Common myeloid progenitor, CD34-positive (primary cell): ENCODE measurements at regions of chr12 and their contacts with region 1.

Region 1: DNA sequence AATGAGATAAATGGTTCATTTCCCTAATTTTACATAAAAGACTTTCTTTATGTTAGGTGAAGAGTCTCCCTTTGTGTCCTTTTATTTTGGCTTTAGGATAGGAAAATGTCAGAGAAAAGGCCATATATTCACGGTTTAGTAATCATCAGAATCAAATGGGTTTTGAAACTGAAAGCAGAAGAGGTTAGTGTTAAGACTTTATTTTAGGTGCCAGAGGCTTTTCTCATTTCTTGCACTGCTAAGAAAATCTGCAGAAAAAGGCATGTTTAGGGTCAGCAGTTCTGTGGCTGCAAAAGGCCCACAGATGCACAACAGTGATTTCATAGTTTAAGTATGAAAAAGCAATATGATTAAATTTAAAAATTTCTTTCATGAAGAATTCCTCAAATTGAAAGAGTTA is 80.4 kb upstream of the SINHCAF start:
- DNase-seq: no peak
- H3K4me3 ChIP-seq: no peak overlapping the region
- H3K27ac ChIP-seq: no peak overlapping the region
- H3K4me1 ChIP-seq: peaks cover 0 to 1% (median 0%) of the 10 kb centered on the region in 4 experiments
- H3K27me3 ChIP-seq: no peaks in the 10 kb centered on the region

Region 2: GRCh38 chr12:31393004-31393550 is 13.3 kb before region 1 on chr12:
- CTCF ChIA-PET with region 1: interaction called, 18 read pairs
- POLR2A ChIA-PET with region 1: no interaction called
- DNase-seq: no peak
- H3K4me3 ChIP-seq: no peak overlapping the region
- H3K27ac ChIP-seq: no peak overlapping the region
- H3K4me1 ChIP-seq: no peaks in the 10 kb centered on the region
- H3K27me3 ChIP-seq: no peaks in the 10 kb centered on the region

Region 3: DNA sequence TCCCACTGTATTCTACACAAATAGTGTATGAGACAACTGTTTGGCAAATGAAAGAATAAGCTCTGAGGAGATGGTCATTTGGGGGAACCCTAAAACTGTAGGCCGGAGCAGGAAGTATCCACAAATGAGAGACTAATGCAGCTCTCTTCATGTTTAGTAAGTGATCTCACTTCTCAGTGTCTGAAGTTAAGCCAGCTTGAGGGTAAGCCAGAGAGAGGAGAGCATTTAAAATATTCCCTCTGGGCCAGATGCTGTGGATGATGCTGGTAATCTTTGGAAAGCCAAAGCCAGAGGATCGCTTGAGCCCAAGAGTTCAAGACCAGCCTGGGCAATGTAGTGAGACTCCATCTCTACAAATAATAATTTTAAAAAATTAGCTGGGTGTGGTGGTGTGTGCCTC is 50.2 kb after region 1 on chr12:
- CTCF ChIA-PET with region 1: no interaction called
- POLR2A ChIA-PET with region 1: no interaction called
- DNase-seq: no peak
- H3K4me3 ChIP-seq: no peak overlapping the region
- H3K27ac ChIP-seq: no peak overlapping the region
- H3K4me1 ChIP-seq: no peaks in the 10 kb centered on the region
- H3K27me3 ChIP-seq: no peaks in the 10 kb centered on the region

Region 4: GRCh38 chr12:31631784-31632183 is 225.4 kb after region 1 on chr12:
- CTCF ChIA-PET with region 1: interaction called, 19 read pairs
- POLR2A ChIA-PET with region 1: no interaction called
- DNase-seq: no peak
- H3K4me3 ChIP-seq: no peak overlapping the region
- H3K27ac ChIP-seq: no peak overlapping the region
- H3K4me1 ChIP-seq: peaks cover 0 to 5% (median 1%) of the 10 kb centered on the region in 4 experiments
- H3K27me3 ChIP-seq: no peaks in the 10 kb centered on the region

Region 5: DNA sequence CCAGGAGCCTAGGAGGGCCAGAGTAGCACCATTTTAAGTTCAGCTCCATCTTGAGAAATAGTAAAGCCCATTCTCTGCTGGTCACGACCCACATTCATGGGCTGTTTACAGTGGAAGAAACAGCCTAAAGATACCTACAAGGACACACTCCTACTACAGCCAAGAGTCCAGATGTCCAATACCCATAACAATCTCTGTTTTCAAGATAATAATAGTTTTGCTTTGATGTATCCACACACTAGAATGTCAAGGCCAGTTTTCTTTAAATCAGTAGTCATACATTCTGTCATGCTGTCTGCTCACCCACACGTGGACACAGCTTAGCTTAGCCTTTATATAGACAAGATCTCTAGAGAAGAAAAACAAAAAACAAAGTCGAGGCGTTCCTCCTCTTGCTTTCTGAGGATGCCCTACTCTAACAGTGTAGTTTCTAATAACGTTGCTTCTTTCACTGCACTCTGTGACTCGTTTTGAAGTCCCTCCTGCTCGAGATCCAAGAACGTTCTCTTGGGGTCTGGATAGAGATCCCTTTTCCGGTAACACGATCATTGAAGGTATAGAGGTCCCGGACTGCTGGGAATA is 235.3 kb after region 1 on chr12:
- CTCF ChIA-PET with region 1: interaction called, 14 read pairs
- POLR2A ChIA-PET with region 1: no interaction called
- DNase-seq: no peak
- H3K4me3 ChIP-seq: no peak overlapping the region
- H3K27ac ChIP-seq: no peak overlapping the region
- H3K4me1 ChIP-seq: peaks cover 0 to 15% (median 3%) of the 10 kb centered on the region in 4 experiments
- H3K27me3 ChIP-seq: no peaks in the 10 kb centered on the region